Sigmoid colon (tissue), 7 donors: ENCODE measurements at regions of chr10 and their contacts with region 1.

Region 1: DNA sequence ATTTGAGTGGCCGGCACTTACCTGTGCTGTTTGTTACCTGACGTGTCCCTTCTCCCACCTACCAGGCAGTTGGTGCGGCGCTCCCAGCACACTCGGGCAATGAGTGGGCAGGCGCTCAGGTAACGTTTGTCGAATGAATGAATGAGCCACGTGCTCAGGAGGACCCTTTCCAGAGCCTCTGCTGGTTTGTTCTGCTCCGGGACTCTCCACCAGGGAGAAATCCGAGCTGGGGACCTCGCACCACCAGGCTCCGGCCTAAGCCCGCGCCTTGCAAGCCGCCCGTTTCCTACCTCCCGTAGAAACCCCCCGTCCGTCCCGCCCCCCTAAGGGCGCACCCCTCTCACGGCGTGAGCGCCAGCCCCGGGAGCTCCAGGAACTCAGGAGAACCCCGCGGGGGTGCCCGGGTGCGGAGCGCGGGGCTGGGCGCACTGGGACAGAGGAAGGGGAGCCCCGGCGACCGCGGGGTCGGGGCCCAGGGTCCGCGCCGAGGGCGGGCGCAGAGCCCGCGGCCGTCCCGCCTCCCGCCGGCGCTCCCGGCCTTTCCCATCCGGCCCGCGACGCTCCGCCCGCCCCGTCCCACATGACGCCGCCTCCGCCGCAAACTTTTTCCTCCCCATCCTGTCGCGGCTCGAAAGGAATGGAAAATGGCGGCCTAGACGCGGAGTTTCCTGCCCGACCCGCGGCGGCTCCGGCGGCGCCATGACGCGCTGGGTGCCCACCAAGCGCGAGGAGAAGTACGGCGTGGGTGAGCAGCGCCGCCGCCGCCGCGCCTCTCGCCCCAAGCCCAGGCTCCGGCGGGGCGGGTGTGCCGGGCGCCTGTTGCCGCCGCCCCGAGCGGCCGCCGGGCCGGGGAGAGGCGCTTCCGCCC is at the start of gene DOCK1:
- DNase-seq: peak; percentile 83
- H3K4me3 ChIP-seq: peak within 1 kb of the TSS; percentile 84 to 99 (median 90)
- H3K27ac ChIP-seq: peak within 1 kb of the TSS; percentile 81 to 89 (median 82)
- H3K4me1 ChIP-seq: peaks cover 0 to 22% (median 18%) of the 10 kb centered on the region in 4 donors
- H3K27me3 ChIP-seq: no peaks in the 10 kb centered on the region
- CTCF ChIP-seq: no peak
- EP300 ChIP-seq: no peak
- POLR2A ChIP-seq: no peak
- total RNA-seq, gene DOCK1: 40.2 to 53.7 (median 46.0) TPM

Region 2: DNA sequence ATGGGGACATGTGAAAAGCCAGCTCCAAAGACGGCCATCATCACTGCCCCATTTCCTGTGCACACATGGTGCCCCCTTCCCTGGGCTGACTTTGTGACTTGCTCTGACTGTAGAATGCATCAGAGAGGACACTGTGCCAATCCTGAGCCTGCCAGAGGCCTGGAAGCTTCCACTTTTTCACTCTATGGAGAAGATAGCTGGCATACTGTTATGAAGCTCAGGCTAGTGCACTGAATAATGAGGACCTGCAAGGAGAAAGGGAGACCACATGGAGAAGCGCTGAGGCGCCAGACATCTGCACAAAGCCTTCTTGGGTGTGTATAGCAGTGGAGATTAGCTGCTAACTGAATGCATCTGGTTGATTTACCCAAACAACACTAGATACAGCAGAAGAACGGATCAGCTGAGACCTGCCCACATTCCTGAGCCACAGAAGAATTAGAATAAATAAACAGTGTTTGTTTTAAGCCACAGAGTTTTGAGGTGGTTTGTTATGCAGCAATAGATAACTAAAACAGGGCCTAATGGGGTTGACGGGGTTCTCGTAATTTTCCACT is 175.7 kb before region 1 on chr10:
- intact Hi-C with region 1: no loop called
- DNase-seq: no peak
- H3K4me3 ChIP-seq: no peak overlapping the region
- H3K27ac ChIP-seq: no peak overlapping the region
- H3K4me1 ChIP-seq: no peaks in the 10 kb centered on the region
- H3K27me3 ChIP-seq: no peaks in the 10 kb centered on the region
- CTCF ChIP-seq: no peak
- EP300 ChIP-seq: no peak
- POLR2A ChIP-seq: no peak

Region 3: GRCh38 chr10:127012769-127013152 is 107.7 kb after region 1 on chr10:
- intact Hi-C with region 1: loop called (anchors 10 kb)
- DNase-seq: no peak
- H3K4me3 ChIP-seq: no peak overlapping the region
- H3K27ac ChIP-seq: no peak overlapping the region
- H3K4me1 ChIP-seq: peaks cover 0 to 11% (median 7%) of the 10 kb centered on the region in 4 donors
- H3K27me3 ChIP-seq: no peaks in the 10 kb centered on the region
- CTCF ChIP-seq: no peak
- EP300 ChIP-seq: no peak
- POLR2A ChIP-seq: no peak

Region 4: GRCh38 chr10:127325506-127325905 is 420.5 kb after region 1 on chr10:
- intact Hi-C with region 1: no loop called
- DNase-seq: no peak
- H3K4me3 ChIP-seq: no peak overlapping the region
- H3K27ac ChIP-seq: no peak overlapping the region
- H3K4me1 ChIP-seq: no peaks in the 10 kb centered on the region
- H3K27me3 ChIP-seq: no peaks in the 10 kb centered on the region
- CTCF ChIP-seq: no peak
- EP300 ChIP-seq: no peak
- POLR2A ChIP-seq: no peak